CD4-positive, alpha-beta memory T cell (primary cell): ENCODE measurements at regions of chr19 and their contacts with region 1.

Region 1: GRCh38 chr19:13195678-13196077 is 45.5 kb downstream of the IER2 start:
- DNase-seq: peak; percentile 60 to 66 (median 62)
- H3K4me3 ChIP-seq: no peak overlapping the region
- H3K4me3 Mint-ChIP-seq: peak overlapping the region in 6 of 8 donors; percentile 9 to 68 (median 56)
- H3K27ac ChIP-seq: no peak overlapping the region
- H3K27ac Mint-ChIP-seq: peak overlapping the region in 6 of 7 donors; percentile 52 to 91 (median 75)
- H3K4me1 ChIP-seq: peaks cover 39% of the 10 kb centered on the region
- H3K4me1 Mint-ChIP-seq: peaks cover 12 to 32% (median 23%) of the 10 kb centered on the region in 4 donors
- H3K27me3 ChIP-seq: no peaks in the 10 kb centered on the region
- H3K27me3 Mint-ChIP-seq: no peaks in the 10 kb centered on the region

Region 2: GRCh38 chr19:13022859-13023636 is 172.6 kb before region 1 on chr19:
- CTCF ChIA-PET with region 1: no interaction called
- POLR2A ChIA-PET with region 1: no interaction called
- intact Hi-C with region 1: no loop called
- DNase-seq: no peak
- H3K4me3 ChIP-seq: no peak overlapping the region
- H3K4me3 Mint-ChIP-seq: peak overlapping the region; percentile 48 to 79 (median 70)
- H3K27ac ChIP-seq: no peak overlapping the region
- H3K27ac Mint-ChIP-seq: no peak overlapping the region
- H3K4me1 ChIP-seq: peaks cover 19% of the 10 kb centered on the region
- H3K4me1 Mint-ChIP-seq: peaks cover 10 to 29% (median 18%) of the 10 kb centered on the region in 4 donors
- H3K27me3 ChIP-seq: peaks cover 13% of the 10 kb centered on the region
- H3K27me3 Mint-ChIP-seq: peaks cover 29 to 34% of the 10 kb centered on the region in 2 donors

Region 3: GRCh38 chr19:13155472-13156359 is 40.0 kb before region 1 on chr19:
- CTCF ChIA-PET with region 1: interaction called, 52 read pairs
- POLR2A ChIA-PET with region 1: interaction called, 69 read pairs
- intact Hi-C with region 1: loop called (anchors 1 kb)
- DNase-seq: peak; percentile 80 to 89 (median 83)
- H3K4me3 ChIP-seq: peak overlapping the region; percentile 98 to 100
- H3K4me3 Mint-ChIP-seq: peak overlapping the region; percentile 95 to 99 (median 99)
- H3K27ac ChIP-seq: peak overlapping the region; percentile 98
- H3K27ac Mint-ChIP-seq: peak overlapping the region; percentile 98 to 99 (median 99)
- H3K4me1 ChIP-seq: peaks cover 48% of the 10 kb centered on the region
- H3K4me1 Mint-ChIP-seq: peaks cover 27 to 77% (median 38%) of the 10 kb centered on the region in 4 donors
- H3K27me3 ChIP-seq: no peaks in the 10 kb centered on the region
- H3K27me3 Mint-ChIP-seq: peaks cover 0 to 3% of the 10 kb centered on the region in 2 donors

Region 4: GRCh38 chr19:13172068-13172896 is 23.4 kb before region 1 on chr19:
- CTCF ChIA-PET with region 1: interaction called, 91 read pairs
- POLR2A ChIA-PET with region 1: interaction called, 29 read pairs
- intact Hi-C with region 1: loop called (anchors 1 kb)
- DNase-seq: peak; percentile 62 to 92 (median 63)
- H3K4me3 ChIP-seq: peak overlapping the region; percentile 18 to 46
- H3K4me3 Mint-ChIP-seq: peak overlapping the region; percentile 83 to 94 (median 86)
- H3K27ac ChIP-seq: peak overlapping the region; percentile 53
- H3K27ac Mint-ChIP-seq: peak overlapping the region; percentile 94 to 99 (median 98)
- H3K4me1 ChIP-seq: peaks cover 67% of the 10 kb centered on the region
- H3K4me1 Mint-ChIP-seq: peaks cover 37 to 78% (median 50%) of the 10 kb centered on the region in 4 donors
- H3K27me3 ChIP-seq: no peaks in the 10 kb centered on the region
- H3K27me3 Mint-ChIP-seq: no peaks in the 10 kb centered on the region

Region 5: GRCh38 chr19:13212759-13213330 is 17.2 kb after region 1 on chr19:
- CTCF ChIA-PET with region 1: interaction called, 21 read pairs
- POLR2A ChIA-PET with region 1: interaction called, 8 read pairs
- intact Hi-C with region 1: loop called (anchors 2 kb)
- DNase-seq: peak; percentile 62 to 73 (median 66)
- H3K4me3 ChIP-seq: no peak overlapping the region
- H3K4me3 Mint-ChIP-seq: peak overlapping the region in 3 of 8 donors; percentile 43 to 79 (median 44)
- H3K27ac ChIP-seq: no peak overlapping the region
- H3K27ac Mint-ChIP-seq: peak overlapping the region in 5 of 7 donors; percentile 4 to 75 (median 25)
- H3K4me1 ChIP-seq: peaks cover 14% of the 10 kb centered on the region
- H3K4me1 Mint-ChIP-seq: peaks cover 17 to 50% (median 29%) of the 10 kb centered on the region in 4 donors
- H3K27me3 ChIP-seq: no peaks in the 10 kb centered on the region
- H3K27me3 Mint-ChIP-seq: no peaks in the 10 kb centered on the region

Region 6: GRCh38 chr19:13262450-13262849 is 66.8 kb after region 1 on chr19:
- CTCF ChIA-PET with region 1: interaction called, 77 read pairs
- POLR2A ChIA-PET with region 1: interaction called, 11 read pairs
- intact Hi-C with region 1: loop called (anchors 1 kb)
- DNase-seq: peak in 4 of 5 donors; percentile 45 to 56 (median 51)
- H3K4me3 ChIP-seq: no peak overlapping the region
- H3K4me3 Mint-ChIP-seq: no peak overlapping the region
- H3K27ac ChIP-seq: no peak overlapping the region
- H3K27ac Mint-ChIP-seq: peak overlapping the region in 3 of 7 donors; percentile 35 to 59 (median 43)
- H3K4me1 ChIP-seq: no peaks in the 10 kb centered on the region
- H3K4me1 Mint-ChIP-seq: peaks cover 2 to 4% (median 3%) of the 10 kb centered on the region in 4 donors
- H3K27me3 ChIP-seq: no peaks in the 10 kb centered on the region
- H3K27me3 Mint-ChIP-seq: peaks cover 7 to 18% of the 10 kb centered on the region in 2 donors